Activated naive CD4-positive, alpha-beta T cell treated with anti-CD3 and anti-CD28 coated beads, Interleukin-2, amount 10 ng/mL, durations not matched to agents 7 days and 5 days (primary cell): ENCODE measurements at regions of chr17 and their contacts with region 1.

Region 1: GRCh38 chr17:43946069-43946696 is 3.9 kb upstream of the PPY start:
- DNase-seq: no peak
- H3K4me3 Mint-ChIP-seq: no peak overlapping the region
- H3K27ac Mint-ChIP-seq: no peak overlapping the region
- H3K4me1 Mint-ChIP-seq: peaks cover 7% of the 10 kb centered on the region
- H3K27me3 Mint-ChIP-seq: peaks cover 46% of the 10 kb centered on the region

Region 2: GRCh38 chr17:43927060-43927864 is 18.9 kb before region 1 on chr17:
- CTCF ChIA-PET with region 1: interaction called, 25 read pairs
- DNase-seq: peak; percentile 28
- H3K4me3 Mint-ChIP-seq: peak overlapping the region; percentile 64
- H3K27ac Mint-ChIP-seq: peak overlapping the region; percentile 6
- H3K4me1 Mint-ChIP-seq: peaks cover 27% of the 10 kb centered on the region
- H3K27me3 Mint-ChIP-seq: peaks cover 50% of the 10 kb centered on the region

Region 3: GRCh38 chr17:43994272-43995149 is 48.3 kb after region 1 on chr17:
- CTCF ChIA-PET with region 1: interaction called, 57 read pairs
- DNase-seq: peak; percentile 76
- H3K4me3 Mint-ChIP-seq: no peak overlapping the region
- H3K27ac Mint-ChIP-seq: no peak overlapping the region
- H3K4me1 Mint-ChIP-seq: no peaks in the 10 kb centered on the region
- H3K27me3 Mint-ChIP-seq: peaks cover 12% of the 10 kb centered on the region

Region 4: GRCh38 chr17:44044067-44044466 is 97.9 kb after region 1 on chr17:
- CTCF ChIA-PET with region 1: interaction called, 59 read pairs
- DNase-seq: no peak
- H3K4me3 Mint-ChIP-seq: no peak overlapping the region
- H3K27ac Mint-ChIP-seq: peak overlapping the region; percentile 33
- H3K4me1 Mint-ChIP-seq: peaks cover 21% of the 10 kb centered on the region
- H3K27me3 Mint-ChIP-seq: no peaks in the 10 kb centered on the region

Region 5: GRCh38 chr17:44167181-44167861 is 221.1 kb after region 1 on chr17:
- CTCF ChIA-PET with region 1: interaction called, 12 read pairs
- DNase-seq: no peak
- H3K4me3 Mint-ChIP-seq: no peak overlapping the region
- H3K27ac Mint-ChIP-seq: no peak overlapping the region
- H3K4me1 Mint-ChIP-seq: peaks cover 5% of the 10 kb centered on the region
- H3K27me3 Mint-ChIP-seq: no peaks in the 10 kb centered on the region